AG04450 (cell line): ENCODE measurements at regions of chr2 and their contacts with region 1.

Region 1: DNA sequence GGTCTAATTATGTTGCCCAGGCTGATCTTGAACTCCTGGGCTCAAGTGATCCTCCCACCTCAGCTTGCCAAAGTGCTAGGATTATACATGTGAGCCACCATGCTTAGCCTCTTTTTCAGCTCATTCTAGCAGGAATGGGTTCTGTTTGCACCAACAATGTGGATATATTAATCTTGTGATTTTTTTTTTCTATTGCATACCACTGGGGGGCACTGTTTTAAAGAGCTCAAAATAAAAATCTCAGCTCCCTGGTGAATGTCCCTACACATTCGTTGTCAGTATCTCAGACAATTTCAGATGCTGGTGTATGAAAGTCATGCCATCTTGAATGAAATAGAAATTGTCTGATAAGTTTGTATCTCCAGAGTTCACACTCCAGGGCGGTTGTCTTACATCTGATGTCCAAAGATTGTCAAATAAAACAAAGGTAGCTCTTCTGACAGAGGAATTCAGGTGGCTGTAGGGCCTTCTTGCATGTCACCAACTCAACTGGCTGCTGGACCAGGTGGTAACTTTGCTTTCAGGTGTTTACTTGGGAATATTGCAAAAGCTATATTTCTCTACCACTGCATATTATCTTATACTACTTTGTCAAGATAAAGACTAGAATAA is 3.1 kb upstream of the MATN3 start:
- DNase-seq: peak; percentile 18
- H3K4me3 ChIP-seq: no peak overlapping the region
- H3K27ac ChIP-seq: no peak overlapping the region
- H3K27me3 ChIP-seq: no peaks in the 10 kb centered on the region
- CTCF ChIP-seq: peak; percentile 63

Region 2: GRCh38 chr2:19673213-19673791 is 342.3 kb before region 1 on chr2:
- CTCF ChIA-PET with region 1: no interaction called
- POLR2A ChIA-PET with region 1: no interaction called
- DNase-seq: no peak
- H3K4me3 ChIP-seq: no peak overlapping the region
- H3K27ac ChIP-seq: no peak overlapping the region
- H3K27me3 ChIP-seq: no peaks in the 10 kb centered on the region
- CTCF ChIP-seq: no peak

Region 3: DNA sequence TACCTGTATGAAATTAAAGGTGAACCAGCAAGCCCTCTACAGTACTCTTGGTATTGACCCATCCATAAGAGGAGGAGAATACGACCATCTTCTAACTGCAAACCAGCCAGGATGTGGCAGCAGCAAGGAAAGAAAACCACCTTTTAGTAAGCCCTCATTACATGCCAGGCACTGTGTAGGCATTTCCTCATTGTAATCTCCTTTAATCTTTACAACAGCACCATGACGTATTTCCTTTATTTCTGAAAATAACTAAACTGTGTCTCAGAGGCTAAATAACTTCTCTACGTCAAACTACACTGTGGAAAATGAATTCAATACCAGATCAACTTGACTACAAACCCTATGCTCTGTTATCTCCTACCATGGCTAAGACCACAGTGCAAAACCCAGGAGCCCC is 43.9 kb before region 1 on chr2:
- CTCF ChIA-PET with region 1: interaction called, 25 read pairs
- POLR2A ChIA-PET with region 1: no interaction called
- DNase-seq: no peak
- H3K4me3 ChIP-seq: no peak overlapping the region
- H3K27ac ChIP-seq: no peak overlapping the region
- H3K27me3 ChIP-seq: no peaks in the 10 kb centered on the region
- CTCF ChIP-seq: no peak

Region 4: GRCh38 chr2:20040489-20041172 is 25.1 kb after region 1 on chr2:
- CTCF ChIA-PET with region 1: interaction called, 73 read pairs
- POLR2A ChIA-PET with region 1: interaction called, 3 read pairs
- DNase-seq: no peak
- H3K4me3 ChIP-seq: no peak overlapping the region
- H3K27ac ChIP-seq: no peak overlapping the region
- H3K27me3 ChIP-seq: no peaks in the 10 kb centered on the region
- CTCF ChIP-seq: no peak

Region 5: DNA sequence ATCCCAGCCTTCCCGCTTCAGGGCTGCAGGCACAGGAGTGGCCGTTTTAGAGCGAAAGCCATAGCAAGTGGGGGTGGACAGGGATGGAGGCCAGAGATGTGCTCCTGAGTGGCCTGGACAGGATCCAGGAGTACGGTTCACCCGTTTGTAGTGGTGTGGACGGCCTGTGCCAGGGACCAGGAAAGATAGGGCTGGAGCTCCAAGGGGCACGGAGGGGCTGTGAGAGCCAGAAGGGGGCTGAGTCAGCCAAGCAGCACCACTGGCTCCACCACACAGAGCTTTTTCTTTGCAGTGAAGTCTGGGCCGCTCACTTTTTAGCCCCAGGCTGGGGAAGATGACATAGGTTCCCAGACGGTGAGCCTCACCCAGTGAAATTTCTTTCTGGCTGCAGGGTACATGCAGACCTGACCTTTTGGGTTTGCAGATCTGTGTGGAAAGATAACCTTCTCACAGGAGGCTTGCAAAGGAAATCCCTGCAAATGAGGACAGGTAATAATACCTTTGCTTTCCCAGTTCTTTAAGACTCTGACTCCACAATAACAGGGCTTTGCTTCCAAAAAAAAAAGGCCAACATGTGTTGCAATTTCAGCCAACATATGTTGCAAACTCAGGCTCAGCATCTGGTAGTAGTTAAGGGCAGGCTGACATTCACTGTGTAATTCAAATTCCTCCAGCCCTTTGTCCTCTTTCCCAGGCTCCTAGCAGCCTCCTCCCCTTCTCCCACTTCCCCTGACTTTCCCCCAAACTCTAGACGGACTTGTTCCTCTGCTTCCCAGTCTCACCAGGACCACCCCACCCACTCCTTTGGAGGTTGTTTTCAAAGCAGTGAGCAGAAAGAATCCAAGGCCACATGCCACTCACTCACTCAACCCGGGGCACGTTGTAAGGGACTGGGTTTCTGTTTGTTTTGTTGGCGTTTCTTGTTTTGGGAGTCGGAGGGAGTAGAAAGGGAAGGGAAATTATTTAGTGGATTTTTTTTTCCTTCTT is 56.1 kb after region 1 on chr2:
- CTCF ChIA-PET with region 1: interaction called, 13 read pairs
- POLR2A ChIA-PET with region 1: no interaction called
- DNase-seq: peak; percentile 97
- H3K4me3 ChIP-seq: peak overlapping the region; percentile 36
- H3K27ac ChIP-seq: peak overlapping the region; percentile 100
- H3K27me3 ChIP-seq: no peaks in the 10 kb centered on the region
- CTCF ChIP-seq: no peak

Region 6: DNA sequence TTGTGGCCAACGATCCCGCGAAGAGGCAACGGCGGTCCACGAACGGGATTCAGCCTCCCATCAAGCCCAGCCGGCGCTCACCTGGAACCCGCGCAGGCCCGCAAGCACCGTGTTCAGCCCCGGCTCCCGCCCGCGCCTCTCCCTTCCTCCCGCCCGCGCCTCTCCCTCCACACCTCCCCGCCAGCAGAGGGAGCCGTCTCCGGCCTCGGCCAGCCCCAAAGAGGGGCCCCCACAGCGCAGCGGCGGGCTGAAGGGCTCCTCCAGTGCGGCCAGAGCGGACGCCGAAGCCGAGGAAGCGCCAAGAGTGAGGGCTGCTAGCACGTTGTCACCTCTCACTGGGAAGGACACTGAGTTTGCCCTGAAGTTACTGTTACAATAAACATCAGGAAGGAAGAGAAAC is 91.2 kb after region 1 on chr2:
- CTCF ChIA-PET with region 1: interaction called, 41 read pairs
- POLR2A ChIA-PET with region 1: no interaction called
- DNase-seq: no peak
- H3K4me3 ChIP-seq: peak overlapping the region; percentile 37
- H3K27ac ChIP-seq: no peak overlapping the region
- H3K27me3 ChIP-seq: no peaks in the 10 kb centered on the region
- CTCF ChIP-seq: peak; percentile 51

Region 7: GRCh38 chr2:20182241-20182931 is 166.8 kb after region 1 on chr2:
- CTCF ChIA-PET with region 1: no interaction called
- POLR2A ChIA-PET with region 1: no interaction called
- DNase-seq: no peak
- H3K4me3 ChIP-seq: no peak overlapping the region
- H3K27ac ChIP-seq: peak overlapping the region; percentile 24
- H3K27me3 ChIP-seq: no peaks in the 10 kb centered on the region
- CTCF ChIP-seq: no peak